AG04450 (cell line): ENCODE measurements at regions of chr7 and their contacts with region 1.

Region 1: DNA sequence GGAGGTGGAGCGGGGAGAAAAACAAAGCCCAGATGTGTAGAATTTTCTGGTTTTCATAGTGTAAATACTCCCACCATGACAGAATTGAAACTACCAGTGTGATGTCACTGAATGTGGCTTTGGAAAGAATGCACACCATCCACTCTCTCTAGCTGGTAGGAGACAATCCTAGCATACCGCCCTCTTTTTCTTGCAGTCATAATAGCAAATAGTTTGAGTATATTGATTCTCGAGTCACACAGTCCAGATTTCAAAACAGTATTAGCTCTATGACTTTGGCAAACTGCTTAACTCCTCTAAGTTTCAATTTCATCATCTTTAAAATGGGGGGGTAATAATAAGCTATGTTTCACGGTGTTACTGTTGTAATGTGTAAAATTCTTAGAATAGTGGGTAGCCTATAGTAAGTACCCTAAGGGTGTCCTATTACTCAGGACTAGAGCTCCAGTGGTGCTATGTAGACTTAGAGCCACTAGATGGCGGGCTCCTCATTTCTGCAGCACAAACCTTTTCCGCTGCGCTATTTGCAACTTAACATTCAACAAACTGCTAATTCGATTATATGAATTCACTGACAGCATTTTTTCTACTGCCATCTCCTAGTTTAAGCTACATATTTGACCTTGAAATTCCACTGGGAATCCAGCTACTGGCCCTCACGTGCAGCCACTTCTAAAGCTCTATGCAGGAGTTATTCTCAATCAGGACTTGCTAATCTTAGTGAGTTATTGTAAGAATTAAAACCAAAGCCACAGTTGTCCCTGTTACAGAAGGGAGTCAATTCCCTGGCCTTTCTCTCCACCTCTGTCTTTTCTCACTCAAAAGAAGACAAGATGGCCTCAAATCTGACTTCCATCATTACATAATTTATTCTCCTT is 18.7 kb downstream of the TAS2R40 start:
- DNase-seq: peak; percentile 68
- H3K4me3 ChIP-seq: no peak overlapping the region
- H3K27ac ChIP-seq: no peak overlapping the region
- H3K27me3 ChIP-seq: no peaks in the 10 kb centered on the region
- CTCF ChIP-seq: peak; percentile 97

Region 2: GRCh38 chr7:142889816-142890215 is 350.7 kb before region 1 on chr7:
- CTCF ChIA-PET with region 1: no interaction called
- POLR2A ChIA-PET with region 1: no interaction called
- DNase-seq: no peak
- H3K4me3 ChIP-seq: no peak overlapping the region
- H3K27ac ChIP-seq: no peak overlapping the region
- H3K27me3 ChIP-seq: no peaks in the 10 kb centered on the region
- CTCF ChIP-seq: no peak

Region 3: DNA sequence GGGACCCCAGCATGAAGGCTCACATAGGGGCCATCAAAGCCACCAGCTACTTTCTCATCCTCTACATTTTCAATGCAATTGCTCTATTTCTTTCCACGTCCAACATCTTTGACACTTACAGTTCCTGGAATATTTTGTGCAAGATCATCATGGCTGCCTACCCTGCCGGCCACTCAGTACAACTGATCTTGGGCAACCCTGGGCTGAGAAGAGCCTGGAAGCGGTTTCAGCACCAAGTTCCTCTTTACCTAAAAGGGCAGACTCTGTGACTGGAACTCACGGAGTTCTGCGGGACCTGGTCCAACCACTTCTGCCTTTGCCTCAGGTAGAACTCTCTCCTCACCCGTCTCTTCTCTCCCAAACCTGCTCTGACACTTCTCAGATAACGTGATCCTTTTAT is 17.7 kb before region 1 on chr7:
- CTCF ChIA-PET with region 1: interaction called, 61 read pairs
- POLR2A ChIA-PET with region 1: no interaction called
- DNase-seq: no peak
- H3K4me3 ChIP-seq: no peak overlapping the region
- H3K27ac ChIP-seq: no peak overlapping the region
- H3K27me3 ChIP-seq: peaks cover 11% of the 10 kb centered on the region
- CTCF ChIP-seq: no peak

Region 4: GRCh38 chr7:143279186-143280098 is 38.9 kb after region 1 on chr7:
- CTCF ChIA-PET with region 1: interaction called, 14 read pairs
- POLR2A ChIA-PET with region 1: no interaction called
- DNase-seq: no peak
- H3K4me3 ChIP-seq: no peak overlapping the region
- H3K27ac ChIP-seq: no peak overlapping the region
- H3K27me3 ChIP-seq: no peaks in the 10 kb centered on the region
- CTCF ChIP-seq: no peak

Region 5: DNA sequence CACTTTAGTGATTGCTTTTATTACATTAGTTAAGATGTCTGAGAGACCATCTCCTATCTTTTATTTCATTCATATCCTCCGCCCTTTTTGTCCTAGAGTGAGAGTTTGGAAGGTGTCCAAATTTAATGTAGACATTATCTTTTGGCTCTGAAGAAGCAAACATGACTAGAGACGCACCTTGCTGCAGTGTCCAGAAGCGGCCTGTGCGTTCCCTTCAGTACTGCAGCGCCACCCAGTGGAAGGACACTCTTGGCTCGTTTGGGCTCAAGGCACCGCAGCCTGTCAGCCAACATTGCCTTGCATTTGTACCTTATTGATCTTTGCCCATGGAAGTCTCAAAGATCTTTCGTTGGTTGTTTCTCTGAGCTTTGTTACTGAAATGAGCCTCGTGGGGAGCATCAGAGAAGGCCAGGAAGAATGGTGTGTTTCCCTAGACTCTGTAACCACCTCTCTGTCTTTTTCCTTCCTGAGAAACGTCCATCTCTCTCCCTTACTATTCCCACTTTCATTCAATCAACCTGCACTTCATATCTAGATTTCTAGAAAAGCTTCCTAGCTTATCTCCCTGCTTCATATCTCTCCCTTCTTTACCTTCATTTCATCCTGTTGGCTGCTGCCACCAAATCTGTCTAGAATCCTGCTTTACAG is 65.0 kb after region 1 on chr7:
- CTCF ChIA-PET with region 1: interaction called, 24 read pairs
- POLR2A ChIA-PET with region 1: no interaction called
- DNase-seq: no peak
- H3K4me3 ChIP-seq: no peak overlapping the region
- H3K27ac ChIP-seq: no peak overlapping the region
- H3K27me3 ChIP-seq: no peaks in the 10 kb centered on the region
- CTCF ChIP-seq: peak; percentile 63

Region 6: GRCh38 chr7:143380255-143380645 is 139.7 kb after region 1 on chr7:
- CTCF ChIA-PET with region 1: interaction called, 30 read pairs
- POLR2A ChIA-PET with region 1: interaction called, 11 read pairs
- DNase-seq: peak; percentile 68
- H3K4me3 ChIP-seq: peak overlapping the region; percentile 93
- H3K27ac ChIP-seq: peak overlapping the region; percentile 100
- H3K27me3 ChIP-seq: no peaks in the 10 kb centered on the region
- CTCF ChIP-seq: peak; percentile 89

Region 7: GRCh38 chr7:143416565-143417149 is 176.1 kb after region 1 on chr7:
- CTCF ChIA-PET with region 1: interaction called, 132 read pairs
- POLR2A ChIA-PET with region 1: no interaction called
- DNase-seq: no peak
- H3K4me3 ChIP-seq: no peak overlapping the region
- H3K27ac ChIP-seq: no peak overlapping the region
- H3K27me3 ChIP-seq: no peaks in the 10 kb centered on the region
- CTCF ChIP-seq: peak; percentile 82

Region 8: DNA sequence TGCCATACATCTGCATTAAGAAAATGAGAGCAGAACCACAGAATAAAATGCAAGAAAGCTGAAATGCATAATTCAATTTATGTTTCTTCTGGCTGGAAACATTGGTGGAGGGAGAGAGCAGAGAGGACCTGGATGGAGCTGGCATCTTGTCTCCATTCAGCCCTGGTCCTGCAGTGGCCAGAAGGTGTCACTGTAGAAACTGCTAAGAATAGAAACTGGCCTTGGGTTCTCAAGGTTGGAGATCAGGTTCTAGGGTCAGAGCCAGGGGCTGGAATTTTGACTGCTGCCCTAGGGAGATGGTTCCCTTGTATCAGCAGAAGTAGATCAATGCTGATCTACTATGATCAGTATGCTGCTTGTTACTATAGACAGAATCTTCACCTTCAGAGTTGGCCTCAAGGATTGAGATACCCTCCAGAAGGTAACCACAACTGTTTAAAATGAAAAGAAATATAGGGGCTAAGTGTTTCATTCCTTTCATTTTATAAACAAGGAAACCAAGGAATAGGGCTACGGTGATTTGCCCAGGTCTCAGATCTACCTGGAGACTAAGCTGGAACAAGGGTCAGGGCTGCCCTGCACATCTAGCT is 250.3 kb after region 1 on chr7:
- CTCF ChIA-PET with region 1: interaction called, 10 read pairs
- POLR2A ChIA-PET with region 1: no interaction called
- DNase-seq: no peak
- H3K4me3 ChIP-seq: no peak overlapping the region
- H3K27ac ChIP-seq: no peak overlapping the region
- H3K27me3 ChIP-seq: no peaks in the 10 kb centered on the region
- CTCF ChIP-seq: peak; percentile 47